Esophagus muscularis mucosa (tissue), 4 donors: ENCODE measurements at regions of chr3 and their contacts with region 1.

Region 1: GRCh38 chr3:88003115-88003755 is 55.6 kb downstream of the CGGBP1 start:
- DNase-seq: no peak
- H3K4me3 ChIP-seq: no peak overlapping the region
- H3K27ac ChIP-seq: no peak overlapping the region
- H3K4me1 ChIP-seq: peaks cover 0 to 5% (median 0%) of the 10 kb centered on the region in 4 donors
- H3K27me3 ChIP-seq: no peaks in the 10 kb centered on the region
- CTCF ChIP-seq: peak; percentile 58 to 77 (median 70)
- EP300 ChIP-seq: no peak
- POLR2A ChIP-seq: no peak

Region 2: DNA sequence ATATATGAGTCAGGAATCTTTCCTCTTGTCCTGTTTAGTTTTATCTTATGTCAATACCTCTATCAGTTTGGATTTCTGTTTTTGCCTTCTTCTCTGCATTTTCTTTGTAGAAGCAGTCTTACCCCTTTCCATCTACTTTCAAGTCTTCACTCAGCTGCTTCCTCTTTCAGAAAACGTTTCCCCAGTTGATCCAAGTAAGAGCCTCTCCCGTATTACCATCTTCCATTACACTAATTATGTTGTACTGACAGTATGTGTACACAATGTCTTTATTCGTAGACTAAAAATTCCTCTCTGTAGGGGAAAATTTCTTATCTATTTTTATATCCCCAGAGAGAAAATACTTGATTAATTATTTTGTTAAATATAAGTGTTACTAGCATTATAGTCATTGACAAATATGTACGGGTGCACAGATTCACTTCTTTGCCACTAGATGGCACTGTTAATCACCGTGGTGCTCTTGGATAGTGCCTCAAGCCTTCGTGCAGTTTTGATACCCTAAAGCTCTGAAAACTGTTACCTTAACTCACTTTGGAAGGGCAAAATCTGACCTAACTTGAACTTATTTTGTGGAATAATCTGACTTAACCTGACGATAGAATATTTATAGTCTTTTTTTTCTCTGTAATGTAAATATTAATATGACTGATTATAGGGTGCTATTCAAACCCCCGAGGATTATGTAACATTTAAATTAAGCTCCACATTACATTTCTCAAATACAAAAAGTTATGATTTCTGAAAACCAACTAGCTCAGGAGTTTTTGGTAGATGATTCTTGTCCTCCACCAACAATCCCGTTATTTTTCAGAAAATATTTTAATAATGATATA is 652.7 kb before region 1 on chr3:
- intact Hi-C with region 1: loop called (anchors 5 kb)
- DNase-seq: no peak
- H3K4me3 ChIP-seq: no peak overlapping the region
- H3K27ac ChIP-seq: no peak overlapping the region
- H3K4me1 ChIP-seq: no peaks in the 10 kb centered on the region
- H3K27me3 ChIP-seq: no peaks in the 10 kb centered on the region
- CTCF ChIP-seq: peak in 2 of 3 experiments; percentile 70 to 83
- EP300 ChIP-seq: no peak
- POLR2A ChIP-seq: no peak

Region 3: GRCh38 chr3:87771341-87772192 is 231.7 kb before region 1 on chr3:
- intact Hi-C with region 1: loop called (anchors 10 kb)
- DNase-seq: no peak
- H3K4me3 ChIP-seq: no peak overlapping the region
- H3K27ac ChIP-seq: no peak overlapping the region
- H3K4me1 ChIP-seq: no peaks in the 10 kb centered on the region
- H3K27me3 ChIP-seq: no peaks in the 10 kb centered on the region
- CTCF ChIP-seq: peak in 2 of 3 experiments; percentile 37 to 50
- EP300 ChIP-seq: no peak
- POLR2A ChIP-seq: no peak

Region 4: DNA sequence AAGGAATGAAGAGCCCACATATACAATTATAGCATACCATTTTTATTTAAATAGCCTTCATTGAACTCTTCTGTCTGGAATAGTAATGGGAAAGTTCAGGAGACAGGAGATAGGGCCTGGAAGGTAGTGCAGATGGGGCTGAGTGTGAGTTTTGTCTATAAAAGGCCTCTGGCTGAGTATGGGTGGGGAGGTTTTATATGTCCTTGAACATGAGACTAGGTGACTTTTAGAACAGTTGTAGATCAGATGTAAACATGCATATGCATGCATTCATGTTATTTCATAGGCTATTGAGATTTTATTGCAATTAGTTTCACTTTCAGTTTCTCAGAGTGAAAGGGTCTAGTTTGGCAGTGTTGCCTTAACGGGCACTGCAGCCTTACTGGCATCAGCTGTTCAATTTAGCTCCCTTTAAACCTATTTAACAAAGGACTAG is 28.4 kb after region 1 on chr3:
- intact Hi-C with region 1: no loop called
- DNase-seq: no peak
- H3K4me3 ChIP-seq: peak overlapping the region; percentile 33 to 55 (median 44)
- H3K27ac ChIP-seq: peak overlapping the region; percentile 45 to 67 (median 62)
- H3K4me1 ChIP-seq: peaks cover 5 to 14% (median 9%) of the 10 kb centered on the region in 4 donors
- H3K27me3 ChIP-seq: no peaks in the 10 kb centered on the region
- CTCF ChIP-seq: no peak
- EP300 ChIP-seq: no peak
- POLR2A ChIP-seq: no peak